IMR-90 (cell line): ENCODE measurements at regions of chr21 and their contacts with region 1.

Region 1: DNA sequence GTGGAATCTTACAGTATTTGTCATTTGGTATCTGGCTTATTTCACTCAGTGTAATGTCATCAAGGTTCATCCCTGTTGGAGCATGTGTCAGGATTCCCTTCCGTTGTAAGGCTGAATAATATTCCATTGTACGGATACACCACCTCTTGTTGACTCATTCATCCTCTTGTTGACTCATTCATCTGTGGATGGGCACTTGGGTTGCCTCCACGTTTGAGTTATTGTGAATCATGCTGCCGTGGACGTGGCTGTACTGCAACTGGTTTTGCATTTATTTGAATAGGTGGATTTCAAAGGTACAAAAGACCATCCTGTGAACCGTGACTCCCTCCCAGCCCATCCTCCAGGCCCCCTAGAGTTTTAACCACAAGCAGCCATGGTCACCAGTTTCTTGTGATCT is 11.9 kb upstream of the TCP10L start:
- DNase-seq: peak; percentile 95
- ATAC-seq: peak; percentile 52
- H3K4me3 ChIP-seq: no peak overlapping the region
- H3K27ac ChIP-seq: no peak overlapping the region
- H3K4me1 ChIP-seq: no peaks in the 10 kb centered on the region
- H3K27me3 ChIP-seq: no peaks in the 10 kb centered on the region
- CTCF ChIP-seq: no peak
- POLR2A ChIP-seq: no peak
- RAD21 ChIP-seq: 0 out of 2 replicates have a peak, but pooled peaks have one; percentile 6

Region 2: DNA sequence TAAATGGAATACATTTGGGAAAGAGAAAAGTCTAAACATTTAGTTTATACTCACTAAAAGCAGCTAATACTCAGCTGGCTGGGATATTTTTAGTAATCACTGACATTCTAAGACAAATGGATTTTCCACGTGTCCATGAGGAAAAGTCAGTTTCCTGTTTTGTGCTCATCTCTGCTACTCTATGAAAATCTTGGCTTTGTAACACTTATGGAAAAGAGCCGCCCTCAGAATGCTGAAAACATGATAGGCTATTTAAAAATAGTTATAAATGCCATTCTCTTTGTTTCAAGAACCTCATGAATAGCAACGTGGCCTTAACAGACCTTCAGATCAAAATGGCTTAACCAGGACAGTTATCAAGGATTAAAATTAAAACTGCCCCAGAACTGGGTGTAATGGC is 268.6 kb before region 1 on chr21:
- CTCF ChIA-PET with region 1: no interaction called
- POLR2A ChIA-PET with region 1: no interaction called
- dilution Hi-C with region 1: no loop called
- in situ Hi-C with region 1: no loop called
- intact Hi-C with region 1: loop called (anchors 1 kb)
- DNase-seq: peak; percentile 64
- ATAC-seq: peak; percentile 30; the same call in 1 of the 2 replicates
- H3K4me3 ChIP-seq: no peak overlapping the region
- H3K27ac ChIP-seq: peak overlapping the region; percentile 22; the same call in 1 of the 2 replicates
- H3K4me1 ChIP-seq: peaks cover 9% of the 10 kb centered on the region
- H3K27me3 ChIP-seq: no peaks in the 10 kb centered on the region
- CTCF ChIP-seq: no peak
- POLR2A ChIP-seq: no peak
- RAD21 ChIP-seq: no peak

Region 3: GRCh38 chr21:32612075-32612998 is 15.1 kb after region 1 on chr21 and contains the start of gene CFAP298:
- CTCF ChIA-PET with region 1: interaction called, 26 read pairs
- POLR2A ChIA-PET with region 1: no interaction called
- dilution Hi-C with region 1: no loop called
- in situ Hi-C with region 1: no loop called
- intact Hi-C with region 1: no loop called
- DNase-seq: peak; percentile 95
- ATAC-seq: peak; percentile 97
- H3K4me3 ChIP-seq: peak within 1 kb of the TSS; percentile 80
- H3K27ac ChIP-seq: peak within 1 kb of the TSS; percentile 91
- H3K4me1 ChIP-seq: peaks cover 2% of the 10 kb centered on the region; the same call in 1 of the 2 replicates
- H3K27me3 ChIP-seq: no peaks in the 10 kb centered on the region
- CTCF ChIP-seq: no peak
- POLR2A ChIP-seq: peak; percentile 73
- RAD21 ChIP-seq: no peak
- total RNA-seq, gene CFAP298: 8.1 and 16.1 TPM in 2 replicates

Region 4: GRCh38 chr21:32794644-32795079 is 197.5 kb after region 1 on chr21:
- CTCF ChIA-PET with region 1: interaction called, 10 read pairs
- POLR2A ChIA-PET with region 1: no interaction called
- dilution Hi-C with region 1: no loop called
- in situ Hi-C with region 1: no loop called
- intact Hi-C with region 1: no loop called
- DNase-seq: no peak
- ATAC-seq: peak; percentile 32; the same call in 1 of the 2 replicates
- H3K4me3 ChIP-seq: no peak overlapping the region
- H3K27ac ChIP-seq: no peak overlapping the region
- H3K4me1 ChIP-seq: peaks cover 2% of the 10 kb centered on the region; the same call in 1 of the 2 replicates
- H3K27me3 ChIP-seq: peaks cover 16% of the 10 kb centered on the region; the same call in 1 of the 2 replicates
- CTCF ChIP-seq: no peak
- POLR2A ChIP-seq: no peak
- RAD21 ChIP-seq: no peak